ENCODE measurements at regions of chr2 and their contacts with region 1.

Region 1: DNA sequence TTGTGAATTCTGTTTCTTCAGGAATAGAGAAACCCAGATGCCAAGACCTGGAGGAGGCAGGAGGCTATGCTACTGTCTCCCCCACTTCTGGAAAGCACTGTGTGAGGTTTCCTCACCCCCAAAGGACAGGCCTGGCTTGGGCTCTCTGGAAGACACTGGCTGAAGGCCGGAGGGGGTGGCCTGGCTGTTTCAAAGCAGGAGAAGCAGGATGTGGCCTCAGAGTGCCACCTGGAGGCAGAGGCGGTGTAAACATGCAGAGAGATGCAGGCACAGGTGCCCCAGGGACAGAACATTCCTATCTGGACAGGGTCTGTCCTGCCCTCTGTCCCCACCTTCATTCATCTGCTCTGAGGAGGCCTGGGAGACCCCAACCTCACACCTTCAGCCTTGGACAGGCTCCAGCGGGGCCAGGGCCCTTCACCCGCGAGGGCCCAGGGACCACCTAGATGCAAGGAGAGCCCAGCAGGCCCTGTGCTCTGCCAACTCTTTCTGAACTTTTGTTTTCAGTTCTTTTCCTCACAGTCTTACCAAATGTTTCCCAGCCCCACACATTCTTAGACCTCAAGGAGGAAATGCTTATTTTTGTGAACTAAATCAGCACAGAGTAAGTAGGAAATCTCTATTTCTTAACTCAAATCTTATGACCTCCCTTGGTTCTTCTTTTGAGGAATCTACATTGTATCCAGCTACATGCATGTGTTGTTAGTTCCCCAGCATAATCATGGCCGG is 79.2 kb downstream of the LONRF2 start:
- DNase-seq: peak in 1 of 2 experiments; percentile 86
- H3K4me3 ChIP-seq: no peak overlapping the region
- H3K27ac ChIP-seq: no peak overlapping the region
- H3K4me1 ChIP-seq: peaks cover 0 to 6% (median 2%) of the 10 kb centered on the region in 4 experiments; a peak in 4 of 7 replicates
- H3K27me3 ChIP-seq: peaks cover 0 to 2% (median under 1%) of the 10 kb centered on the region in 4 experiments; a peak in 2 of 7 replicates
- CTCF ChIP-seq: peak; percentile 92 to 95 (median 93)
- EP300 ChIP-seq: no peak
- POLR2A ChIP-seq: no peak
- RAD21 ChIP-seq: peak; percentile 97

Region 2: DNA sequence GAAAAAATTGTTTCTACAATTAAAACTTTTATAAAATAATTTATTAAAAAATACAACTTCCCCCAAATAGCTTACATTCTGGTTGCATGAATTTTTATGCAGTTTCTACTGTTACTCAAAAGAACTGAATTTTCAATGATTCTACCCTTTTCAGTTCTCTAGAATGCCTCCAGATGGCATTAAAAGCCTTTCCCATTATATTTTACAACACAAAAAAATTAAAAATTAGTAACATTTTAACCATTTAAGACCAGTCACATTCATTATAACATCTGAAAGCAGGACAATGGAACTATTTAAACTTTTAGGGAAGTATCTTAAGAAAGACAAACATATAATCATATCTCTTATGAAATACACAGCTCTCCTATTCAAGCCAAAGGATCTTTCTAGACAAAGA is 517.2 kb before region 1 on chr2:
- CTCF ChIA-PET with region 1: interaction called, 12 read pairs
- POLR2A ChIA-PET with region 1: no interaction called
- DNase-seq: no peak
- H3K4me3 ChIP-seq: no peak overlapping the region
- H3K27ac ChIP-seq: no peak overlapping the region
- H3K4me1 ChIP-seq: no peaks in the 10 kb centered on the region
- H3K27me3 ChIP-seq: no peaks in the 10 kb centered on the region
- CTCF ChIP-seq: peak in 1 of 3 experiments; percentile 17; a peak in 1 of 4 replicates
- EP300 ChIP-seq: no peak
- POLR2A ChIP-seq: no peak
- RAD21 ChIP-seq: peak in 1 of 2 experiments; percentile 41

Region 3: GRCh38 chr2:100146657-100146960 is 96.4 kb before region 1 on chr2:
- CTCF ChIA-PET with region 1: no interaction called
- POLR2A ChIA-PET with region 1: no interaction called
- DNase-seq: no peak
- H3K4me3 ChIP-seq: no peak overlapping the region
- H3K27ac ChIP-seq: no peak overlapping the region
- H3K4me1 ChIP-seq: no peaks in the 10 kb centered on the region
- H3K27me3 ChIP-seq: no peaks in the 10 kb centered on the region; a peak in 1 of 7 replicates
- CTCF ChIP-seq: no peak
- EP300 ChIP-seq: no peak
- POLR2A ChIP-seq: no peak
- RAD21 ChIP-seq: no peak

Region 4: GRCh38 chr2:100228967-100229366 is 14.1 kb before region 1 on chr2:
- CTCF ChIA-PET with region 1: interaction called, 11 read pairs
- POLR2A ChIA-PET with region 1: no interaction called
- DNase-seq: no peak
- H3K4me3 ChIP-seq: no peak overlapping the region
- H3K27ac ChIP-seq: no peak overlapping the region
- H3K4me1 ChIP-seq: no peaks in the 10 kb centered on the region
- H3K27me3 ChIP-seq: no peaks in the 10 kb centered on the region
- CTCF ChIP-seq: no peak
- EP300 ChIP-seq: no peak
- POLR2A ChIP-seq: no peak
- RAD21 ChIP-seq: no peak

Region 5: GRCh38 chr2:100359576-100359975 is 116.5 kb after region 1 on chr2:
- CTCF ChIA-PET with region 1: no interaction called
- POLR2A ChIA-PET with region 1: no interaction called
- DNase-seq: no peak
- H3K4me3 ChIP-seq: no peak overlapping the region
- H3K27ac ChIP-seq: no peak overlapping the region
- H3K4me1 ChIP-seq: no peaks in the 10 kb centered on the region
- H3K27me3 ChIP-seq: no peaks in the 10 kb centered on the region
- CTCF ChIP-seq: no peak
- EP300 ChIP-seq: no peak
- POLR2A ChIP-seq: no peak
- RAD21 ChIP-seq: no peak